OCI-LY7 (cell line): ENCODE measurements at regions of chr17 and their contacts with region 1.

Region 1: GRCh38 chr17:56977673-56978395 is at the start of gene SCPEP1:
- DNase-seq: peak; percentile 90
- H3K4me3 ChIP-seq: peak within 1 kb of the TSS; percentile 78
- H3K27ac ChIP-seq: peak within 1 kb of the TSS; percentile 45
- H3K4me1 ChIP-seq: peaks cover 25% of the 10 kb centered on the region
- CTCF ChIP-seq: 0 out of 2 replicates have a peak, but pooled peaks have one; percentile 16
- total RNA-seq, gene SCPEP1: 36.5 and 48.2 TPM in 2 replicates

Region 2: GRCh38 chr17:56715613-56716357 is 262.0 kb before region 1 on chr17:
- CTCF ChIA-PET with region 1: no interaction called
- POLR2A ChIA-PET with region 1: no interaction called
- intact Hi-C with region 1: no loop called
- DNase-seq: peak; percentile 84
- H3K4me3 ChIP-seq: no peak overlapping the region
- H3K27ac ChIP-seq: no peak overlapping the region
- H3K4me1 ChIP-seq: no peaks in the 10 kb centered on the region
- CTCF ChIP-seq: peak; percentile 94

Region 3: GRCh38 chr17:56966338-56966737 is 11.5 kb before region 1 on chr17:
- CTCF ChIA-PET with region 1: no interaction called
- POLR2A ChIA-PET with region 1: interaction called, 13 read pairs
- intact Hi-C with region 1: no loop called
- DNase-seq: no peak
- H3K4me3 ChIP-seq: no peak overlapping the region
- H3K27ac ChIP-seq: no peak overlapping the region
- H3K4me1 ChIP-seq: peaks cover 13% of the 10 kb centered on the region
- CTCF ChIP-seq: no peak

Region 4: GRCh38 chr17:56988901-56989572 is 11.2 kb after region 1 on chr17:
- CTCF ChIA-PET with region 1: interaction called, 3 read pairs
- POLR2A ChIA-PET with region 1: interaction called, 14 read pairs
- intact Hi-C with region 1: no loop called
- DNase-seq: no peak
- H3K4me3 ChIP-seq: no peak overlapping the region
- H3K27ac ChIP-seq: no peak overlapping the region
- H3K4me1 ChIP-seq: no peaks in the 10 kb centered on the region
- CTCF ChIP-seq: no peak